WTC11 (cell line): ENCODE measurements at regions of chrX and their contacts with region 1.

Region 1: GRCh38 chrX:103464774-103465117 is 54.5 kb downstream of the RAB40A start:
- DNase-seq: peak; percentile 74
- ATAC-seq: peak; percentile 91
- H3K4me3 Mint-ChIP-seq: peak overlapping the region; percentile 45
- H3K27ac Mint-ChIP-seq: no peak overlapping the region
- H3K4me1 Mint-ChIP-seq: peaks cover 13% of the 10 kb centered on the region
- H3K27me3 Mint-ChIP-seq: peaks cover 3% of the 10 kb centered on the region; the same call in 1 of the 2 replicates
- CTCF ChIP-seq: peak; percentile 38; the same call in 1 of the 2 replicates

Region 2: GRCh38 chrX:102899940-102900916 is 564.5 kb before region 1 on chrX:
- CTCF ChIA-PET with region 1: no interaction called
- POLR2A ChIA-PET with region 1: no interaction called
- DNase-seq: peak; percentile 76
- ATAC-seq: peak; percentile 84
- H3K4me3 Mint-ChIP-seq: no peak overlapping the region
- H3K27ac Mint-ChIP-seq: no peak overlapping the region
- H3K4me1 Mint-ChIP-seq: peaks cover 4% of the 10 kb centered on the region; the same call in 1 of the 2 replicates
- H3K27me3 Mint-ChIP-seq: no peaks in the 10 kb centered on the region
- CTCF ChIP-seq: peak; percentile 54

Region 3: GRCh38 chrX:103211012-103211715 is 253.6 kb before region 1 on chrX:
- CTCF ChIA-PET with region 1: interaction called, 11 read pairs
- POLR2A ChIA-PET with region 1: no interaction called
- DNase-seq: peak; percentile 22
- ATAC-seq: 0 out of 2 replicates have a peak, but pooled peaks have one; percentile 6
- H3K4me3 Mint-ChIP-seq: no peak overlapping the region
- H3K27ac Mint-ChIP-seq: 0 out of 2 replicates have a peak overlapping the region, but pooled peaks have one; percentile 27
- H3K4me1 Mint-ChIP-seq: peaks cover 16% of the 10 kb centered on the region
- H3K27me3 Mint-ChIP-seq: peaks cover 5% of the 10 kb centered on the region
- CTCF ChIP-seq: peak; percentile 29; the same call in 1 of the 2 replicates

Region 4: GRCh38 chrX:103293118-103293517 is 171.6 kb before region 1 on chrX:
- CTCF ChIA-PET with region 1: no interaction called
- POLR2A ChIA-PET with region 1: no interaction called
- DNase-seq: no peak
- ATAC-seq: no peak
- H3K4me3 Mint-ChIP-seq: no peak overlapping the region
- H3K27ac Mint-ChIP-seq: no peak overlapping the region
- H3K4me1 Mint-ChIP-seq: peaks cover 15% of the 10 kb centered on the region
- H3K27me3 Mint-ChIP-seq: peaks cover 75% of the 10 kb centered on the region
- CTCF ChIP-seq: no peak

Region 5: DNA sequence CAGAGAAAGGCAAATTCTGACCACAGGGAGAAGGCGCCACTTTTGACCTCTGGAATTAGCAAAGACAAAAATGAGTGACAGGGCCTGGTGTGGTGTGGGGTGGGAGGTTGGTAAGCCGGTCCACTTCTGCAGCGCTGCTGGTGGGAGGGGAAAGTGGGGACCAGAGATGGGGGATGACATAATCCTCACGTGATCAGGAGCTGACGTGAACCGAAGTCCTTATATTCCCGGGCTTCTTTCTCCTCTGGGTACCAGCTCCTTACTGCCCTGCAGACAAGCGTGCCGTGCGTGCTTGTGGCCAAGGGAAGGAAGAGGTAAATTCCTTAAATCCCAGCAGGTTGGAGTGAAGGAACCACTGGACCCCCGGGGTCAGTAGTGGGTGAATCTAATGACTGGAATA is 134.8 kb before region 1 on chrX and contains the start of gene TCEAL7:
- CTCF ChIA-PET with region 1: interaction called, 17 read pairs
- POLR2A ChIA-PET with region 1: interaction called, 3 read pairs
- DNase-seq: peak; percentile 10
- ATAC-seq: peak; percentile 24
- H3K4me3 Mint-ChIP-seq: peak within 1 kb of the TSS; percentile 75
- H3K27ac Mint-ChIP-seq: peak within 1 kb of the TSS; percentile 78; the same call in 1 of the 2 replicates
- H3K4me1 Mint-ChIP-seq: peaks cover 26% of the 10 kb centered on the region
- H3K27me3 Mint-ChIP-seq: no peaks in the 10 kb centered on the region; the same call in none of the 2 replicates
- CTCF ChIP-seq: no peak
- total RNA-seq, gene TCEAL7: 5.6 to 7.7 TPM (median 7.2 TPM) in 3 replicates

Region 6: DNA sequence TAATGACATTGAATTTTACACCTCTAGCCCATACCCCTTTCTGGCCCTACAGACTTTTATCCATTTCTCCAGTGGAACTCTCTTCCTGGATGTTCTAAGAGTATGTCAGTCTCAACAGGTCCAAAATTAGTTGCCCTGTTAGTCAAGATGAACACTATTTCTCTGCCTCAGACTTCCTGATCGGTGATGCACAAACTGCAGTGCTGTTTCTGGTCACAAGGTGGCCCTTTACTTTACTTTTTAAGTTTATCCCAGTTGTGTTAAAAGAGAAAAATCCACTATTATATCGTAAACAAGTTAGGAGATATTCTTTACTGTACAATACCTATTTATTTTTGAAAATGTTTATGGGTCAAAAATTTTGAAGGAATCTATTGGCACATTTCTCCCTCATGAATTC is 121.6 kb before region 1 on chrX:
- CTCF ChIA-PET with region 1: interaction called, 15 read pairs
- POLR2A ChIA-PET with region 1: no interaction called
- DNase-seq: peak; percentile 27
- ATAC-seq: peak; percentile 47
- H3K4me3 Mint-ChIP-seq: no peak overlapping the region
- H3K27ac Mint-ChIP-seq: no peak overlapping the region
- H3K4me1 Mint-ChIP-seq: peaks cover 10% of the 10 kb centered on the region
- H3K27me3 Mint-ChIP-seq: peaks cover 16% of the 10 kb centered on the region
- CTCF ChIP-seq: peak; percentile 28; the same call in 1 of the 2 replicates

Region 7: DNA sequence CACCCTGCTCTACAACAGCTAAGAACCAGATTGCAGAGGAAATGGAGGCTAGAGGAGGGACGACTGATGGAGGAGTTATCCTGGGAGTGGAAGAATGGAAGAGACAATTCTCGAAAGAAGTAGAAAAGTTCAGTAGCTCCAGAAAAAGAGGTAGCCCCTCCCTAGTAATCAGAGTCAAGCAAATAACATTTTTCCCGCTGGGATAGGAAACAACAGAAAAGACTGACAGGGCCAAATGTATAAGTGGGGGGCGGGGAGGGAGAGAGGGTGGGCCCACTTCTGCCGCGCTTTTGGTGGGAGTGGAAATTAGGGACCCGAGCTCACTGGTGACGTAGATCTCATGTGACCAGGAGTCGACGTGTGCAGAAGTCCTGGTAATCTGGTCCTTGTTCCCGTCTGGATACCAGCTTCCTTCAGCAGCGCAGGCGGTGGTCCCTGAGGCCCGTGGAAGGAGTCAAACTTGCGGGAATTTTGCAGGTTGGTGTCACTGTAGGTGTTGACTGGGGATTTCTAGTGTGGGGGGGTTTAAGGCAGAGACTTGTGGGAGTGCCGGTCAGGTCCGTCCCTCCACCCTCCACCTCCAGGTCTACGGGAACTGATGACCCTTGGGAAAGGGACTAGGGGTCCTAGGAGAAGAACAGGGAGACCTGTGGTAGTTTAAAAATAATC is 108.5 kb before region 1 on chrX and contains the start of gene TCEAL9:
- CTCF ChIA-PET with region 1: interaction called, 11 read pairs
- POLR2A ChIA-PET with region 1: interaction called, 3 read pairs
- DNase-seq: peak; percentile 36
- ATAC-seq: peak; percentile 78
- H3K4me3 Mint-ChIP-seq: peak within 1 kb of the TSS; percentile 94
- H3K27ac Mint-ChIP-seq: peak within 1 kb of the TSS; percentile 98
- H3K4me1 Mint-ChIP-seq: peaks cover 7% of the 10 kb centered on the region
- H3K27me3 Mint-ChIP-seq: peaks cover 3% of the 10 kb centered on the region; the same call in 1 of the 2 replicates
- CTCF ChIP-seq: no peak
- total RNA-seq, gene TCEAL9: 30.4 to 35.0 TPM (median 30.7 TPM) in 3 replicates

Region 8: GRCh38 chrX:103376118-103376978 is 88.4 kb before region 1 on chrX and contains the start of gene BEX3:
- CTCF ChIA-PET with region 1: interaction called, 11 read pairs
- POLR2A ChIA-PET with region 1: interaction called, 3 read pairs
- DNase-seq: peak; percentile 68
- ATAC-seq: peak; percentile 90
- H3K4me3 Mint-ChIP-seq: peak within 1 kb of the TSS; percentile 76
- H3K27ac Mint-ChIP-seq: peak within 1 kb of the TSS; percentile 97
- H3K4me1 Mint-ChIP-seq: peaks cover 12% of the 10 kb centered on the region
- H3K27me3 Mint-ChIP-seq: no peaks in the 10 kb centered on the region
- CTCF ChIP-seq: no peak
- total RNA-seq, gene BEX3: 263 to 292 TPM (median 277 TPM) in 3 replicates

Region 9: GRCh38 chrX:103503163-103503852 is 38.6 kb after region 1 on chrX:
- CTCF ChIA-PET with region 1: interaction called, 10 read pairs
- POLR2A ChIA-PET with region 1: no interaction called
- DNase-seq: no peak
- ATAC-seq: peak; percentile 41; the same call in 1 of the 2 replicates
- H3K4me3 Mint-ChIP-seq: peak overlapping the region; percentile 29; the same call in 1 of the 2 replicates
- H3K27ac Mint-ChIP-seq: no peak overlapping the region
- H3K4me1 Mint-ChIP-seq: no peaks in the 10 kb centered on the region
- H3K27me3 Mint-ChIP-seq: no peaks in the 10 kb centered on the region; the same call in 1 of the 2 replicates
- CTCF ChIP-seq: no peak

Region 10: GRCh38 chrX:103687073-103687695 is 222.4 kb after region 1 on chrX:
- CTCF ChIA-PET with region 1: no interaction called
- POLR2A ChIA-PET with region 1: no interaction called
- DNase-seq: peak; percentile 60
- ATAC-seq: peak; percentile 17
- H3K4me3 Mint-ChIP-seq: no peak overlapping the region
- H3K27ac Mint-ChIP-seq: no peak overlapping the region
- H3K4me1 Mint-ChIP-seq: 0 out of 2 replicates have a peak, but pooled peaks cover 4% of the 10 kb centered on the region
- H3K27me3 Mint-ChIP-seq: no peaks in the 10 kb centered on the region
- CTCF ChIP-seq: no peak